ENCODE measurements at regions of chr6 and their contacts with region 1.

Region 1: GRCh38 chr6:13538084-13538483 is 36.3 kb upstream of the SIRT5 start:
- DNase-seq: no peak
- H3K4me3 Mint-ChIP-seq: no peak overlapping the region
- H3K27ac Mint-ChIP-seq: no peak overlapping the region
- H3K4me1 Mint-ChIP-seq: no peaks in the 10 kb centered on the region
- H3K27me3 Mint-ChIP-seq: no peaks in the 10 kb centered on the region

Region 2: GRCh38 chr6:13383328-13384163 is 154.5 kb before region 1 on chr6:
- CTCF ChIA-PET with region 1: no interaction called
- intact Hi-C with region 1: loop called (anchors 2 kb)
- DNase-seq: peak; percentile 46
- H3K4me3 Mint-ChIP-seq: no peak overlapping the region
- H3K27ac Mint-ChIP-seq: no peak overlapping the region
- H3K4me1 Mint-ChIP-seq: peaks cover 13% of the 10 kb centered on the region
- H3K27me3 Mint-ChIP-seq: no peaks in the 10 kb centered on the region

Region 3: GRCh38 chr6:13466304-13467215 is 71.5 kb before region 1 on chr6:
- CTCF ChIA-PET with region 1: no interaction called
- intact Hi-C with region 1: loop called (anchors 2 kb)
- DNase-seq: peak; percentile 73
- H3K4me3 Mint-ChIP-seq: no peak overlapping the region
- H3K27ac Mint-ChIP-seq: no peak overlapping the region
- H3K4me1 Mint-ChIP-seq: peaks cover 45% of the 10 kb centered on the region
- H3K27me3 Mint-ChIP-seq: no peaks in the 10 kb centered on the region

Region 4: GRCh38 chr6:13924146-13924948 is 386.3 kb after region 1 on chr6:
- CTCF ChIA-PET with region 1: no interaction called
- intact Hi-C with region 1: no loop called
- DNase-seq: peak; percentile 53
- H3K4me3 Mint-ChIP-seq: peak overlapping the region; percentile 73
- H3K27ac Mint-ChIP-seq: no peak overlapping the region
- H3K4me1 Mint-ChIP-seq: peaks cover 14% of the 10 kb centered on the region
- H3K27me3 Mint-ChIP-seq: peaks cover 51% of the 10 kb centered on the region

Region 5: DNA sequence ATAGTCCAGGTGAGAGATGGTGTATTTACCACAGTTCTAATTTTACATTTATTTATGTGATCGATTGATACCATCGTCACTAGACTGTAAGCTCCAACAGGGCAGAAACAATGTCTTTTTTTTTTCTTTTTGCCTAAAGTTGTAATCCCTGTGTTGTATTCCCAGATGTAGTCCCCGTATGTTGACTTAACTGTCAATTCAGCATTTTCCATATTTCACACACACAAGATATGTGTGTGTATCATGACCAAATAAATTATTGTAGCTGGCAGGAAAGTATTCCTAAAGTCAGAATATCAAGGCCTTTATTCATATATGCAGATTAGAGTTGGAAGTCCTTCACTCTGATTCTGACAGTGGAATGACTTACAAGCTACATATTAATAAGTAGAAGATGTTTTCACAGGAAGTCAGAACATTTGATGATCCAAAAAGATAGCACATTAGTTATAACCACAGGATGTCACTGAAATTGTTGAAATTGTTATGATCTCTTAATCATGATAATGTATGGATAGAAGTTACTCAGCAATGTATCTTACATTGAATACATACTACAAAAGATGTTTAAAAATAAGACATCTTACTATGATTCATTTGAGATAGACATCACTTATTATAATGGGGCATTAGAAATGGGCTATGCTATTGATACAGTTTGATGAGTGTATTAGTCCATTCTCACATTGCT is 397.3 kb after region 1 on chr6:
- CTCF ChIA-PET with region 1: no interaction called
- intact Hi-C with region 1: no loop called
- DNase-seq: no peak
- H3K4me3 Mint-ChIP-seq: no peak overlapping the region
- H3K27ac Mint-ChIP-seq: no peak overlapping the region
- H3K4me1 Mint-ChIP-seq: peaks cover 7% of the 10 kb centered on the region
- H3K27me3 Mint-ChIP-seq: peaks cover 21% of the 10 kb centered on the region

Region 6: GRCh38 chr6:14066782-14067406 is 528.8 kb after region 1 on chr6:
- CTCF ChIA-PET with region 1: no interaction called
- intact Hi-C with region 1: no loop called
- DNase-seq: peak; percentile 31
- H3K4me3 Mint-ChIP-seq: no peak overlapping the region
- H3K27ac Mint-ChIP-seq: no peak overlapping the region
- H3K4me1 Mint-ChIP-seq: peaks cover 2% of the 10 kb centered on the region
- H3K27me3 Mint-ChIP-seq: peaks cover 5% of the 10 kb centered on the region

Measured in activated naive CD4-positive, alpha-beta T cell treated with anti-CD3 and anti-CD28 coated beads for 36 hours (primary cell).